PC-9 (cell line): ENCODE measurements at regions of chr15 and their contacts with region 1.

Region 1: GRCh38 chr15:51243759-51244158 is 94.6 kb downstream of the CYP19A1 start:
- DNase-seq: no peak
- H3K4me3 ChIP-seq: no peak overlapping the region
- H3K27ac ChIP-seq: peak overlapping the region; percentile 52
- H3K4me1 ChIP-seq: peaks cover 17% of the 10 kb centered on the region
- H3K27me3 ChIP-seq: no peaks in the 10 kb centered on the region
- CTCF ChIP-seq: no peak

Region 2: GRCh38 chr15:50968353-50968752 is 275.4 kb before region 1 on chr15:
- CTCF ChIA-PET with region 1: interaction called, 10 read pairs
- POLR2A ChIA-PET with region 1: no interaction called
- intact Hi-C with region 1: no loop called
- DNase-seq: no peak
- H3K4me3 ChIP-seq: no peak overlapping the region
- H3K27ac ChIP-seq: no peak overlapping the region
- H3K4me1 ChIP-seq: no peaks in the 10 kb centered on the region
- H3K27me3 ChIP-seq: no peaks in the 10 kb centered on the region
- CTCF ChIP-seq: no peak

Region 3: DNA sequence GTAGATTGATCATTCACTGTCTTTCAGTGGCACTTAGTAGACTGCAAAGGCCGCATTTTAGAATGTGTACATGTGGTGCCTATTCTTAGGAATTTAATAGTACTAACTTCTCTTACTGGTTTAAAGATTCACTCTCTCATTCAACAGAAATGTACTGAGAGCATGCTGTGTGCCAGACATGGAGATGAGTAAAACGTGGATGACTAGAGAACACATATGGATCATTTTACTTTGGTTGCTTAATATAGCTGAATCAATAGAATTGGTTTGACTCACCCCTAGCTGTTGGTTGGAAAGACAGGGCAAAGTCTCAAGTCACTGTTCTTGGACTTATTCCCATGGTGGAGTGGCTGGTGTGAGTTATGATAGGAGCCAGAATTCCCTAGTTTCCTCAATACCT is 40.0 kb before region 1 on chr15:
- CTCF ChIA-PET with region 1: no interaction called
- POLR2A ChIA-PET with region 1: interaction called, 12 read pairs
- intact Hi-C with region 1: no loop called
- DNase-seq: no peak
- H3K4me3 ChIP-seq: no peak overlapping the region
- H3K27ac ChIP-seq: no peak overlapping the region
- H3K4me1 ChIP-seq: no peaks in the 10 kb centered on the region
- H3K27me3 ChIP-seq: peaks cover 3% of the 10 kb centered on the region; the same call in 1 of the 2 replicates
- CTCF ChIP-seq: no peak